Right ventricle myocardium superior (tissue), 1 donor: ENCODE measurements at regions of chr9 and their contacts with region 1.

Region 1: GRCh38 chr9:101311758-101312420 is 72.9 kb downstream of the BAAT start:
- DNase-seq: no peak
- ATAC-seq: no peak

Region 2: GRCh38 chr9:100598641-100599145 is 713.2 kb before region 1 on chr9:
- intact Hi-C with region 1: loop called (anchors 2 kb)
- DNase-seq: peak; percentile 91
- ATAC-seq: peak; percentile 89

Region 3: GRCh38 chr9:100700689-100701318 is 611.1 kb before region 1 on chr9:
- intact Hi-C with region 1: loop called (anchors 5 kb)
- DNase-seq: no peak
- ATAC-seq: no peak

Region 4: DNA sequence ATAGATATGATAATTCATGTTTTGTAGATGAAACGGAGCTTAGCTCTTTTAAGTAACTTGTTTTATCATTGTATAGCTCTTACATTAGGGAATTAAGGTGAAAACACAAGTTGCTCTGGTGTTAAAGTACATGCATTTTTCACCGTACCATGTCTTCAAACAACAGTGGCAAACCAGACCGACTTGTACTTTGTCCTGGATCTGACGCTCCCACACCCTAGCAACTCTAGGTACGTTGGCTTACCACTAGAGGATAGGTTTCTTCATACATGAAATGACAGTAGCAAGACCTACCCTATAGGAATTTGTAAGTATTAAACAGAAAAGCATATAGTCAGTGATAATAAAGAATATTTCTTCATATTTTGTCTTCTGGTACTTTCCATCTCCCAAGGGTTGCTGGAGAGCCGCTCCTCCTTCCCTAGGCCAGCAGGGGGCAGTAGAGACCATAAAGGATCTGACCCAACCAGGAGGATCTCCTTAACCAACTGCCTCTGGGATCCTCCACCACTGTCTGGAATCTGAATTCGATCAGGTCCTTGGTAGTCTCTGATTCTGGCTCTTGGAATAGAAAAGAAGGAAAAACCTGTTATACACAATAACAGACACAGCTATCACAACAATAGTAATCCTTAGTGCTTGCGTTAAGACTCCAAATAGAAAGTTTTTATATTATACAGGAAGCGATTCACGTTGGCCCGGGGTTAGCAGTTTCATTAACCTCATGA is 597.4 kb before region 1 on chr9:
- intact Hi-C with region 1: loop called (anchors 5 kb)
- DNase-seq: peak; percentile 45
- ATAC-seq: peak; percentile 77

Region 5: GRCh38 chr9:101119206-101119819 is 192.6 kb before region 1 on chr9:
- intact Hi-C with region 1: loop called (anchors 2 kb)
- DNase-seq: peak; percentile 45
- ATAC-seq: peak; percentile 74